AG04450 (cell line): ENCODE measurements at regions of chr7 and their contacts with region 1.

Region 1: GRCh38 chr7:80884511-80885195 is 34.2 kb downstream of the SEMA3C start:
- DNase-seq: no peak
- H3K4me3 ChIP-seq: no peak overlapping the region; the same call in 1 of the 2 replicates
- H3K27ac ChIP-seq: peak overlapping the region; percentile 62
- H3K27me3 ChIP-seq: no peaks in the 10 kb centered on the region
- CTCF ChIP-seq: no peak

Region 2: GRCh38 chr7:80722616-80723141 is 162.0 kb before region 1 on chr7:
- CTCF ChIA-PET with region 1: no interaction called
- POLR2A ChIA-PET with region 1: interaction called, 10 read pairs
- DNase-seq: peak; percentile 99
- H3K4me3 ChIP-seq: no peak overlapping the region
- H3K27ac ChIP-seq: peak overlapping the region; percentile 95
- H3K27me3 ChIP-seq: no peaks in the 10 kb centered on the region
- CTCF ChIP-seq: no peak